IMR-90 (cell line): ENCODE measurements at regions of chr12 and their contacts with region 1.

Region 1: DNA sequence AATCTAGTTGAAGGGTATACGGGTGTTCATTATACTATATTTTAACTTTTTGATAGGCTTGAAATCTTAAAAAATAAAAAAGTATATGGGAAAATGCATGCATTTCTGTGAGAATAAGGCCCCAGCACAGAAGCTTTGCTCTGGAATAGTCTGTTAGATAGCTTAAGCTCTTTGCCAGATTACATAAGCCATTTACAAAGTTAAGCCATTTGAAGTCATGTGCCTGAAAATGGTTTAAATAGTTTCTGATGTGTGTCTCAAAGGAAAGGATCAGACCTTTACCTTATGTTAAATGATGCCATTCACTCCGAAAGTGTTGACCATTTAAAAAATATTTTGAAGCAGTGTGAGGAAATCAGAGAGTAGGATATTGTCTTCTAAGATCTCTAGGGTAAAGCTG is 51.3 kb downstream of the WASHC4 start:
- DNase-seq: no peak
- ATAC-seq: no peak
- H3K4me3 ChIP-seq: no peak overlapping the region
- H3K27ac ChIP-seq: no peak overlapping the region
- H3K4me1 ChIP-seq: no peaks in the 10 kb centered on the region
- H3K27me3 ChIP-seq: no peaks in the 10 kb centered on the region
- CTCF ChIP-seq: no peak
- POLR2A ChIP-seq: no peak
- RAD21 ChIP-seq: no peak

Region 2: GRCh38 chr12:105142259-105142658 is 16.6 kb before region 1 on chr12:
- CTCF ChIA-PET with region 1: interaction called, 3 read pairs
- POLR2A ChIA-PET with region 1: no interaction called
- dilution Hi-C with region 1: no loop called
- in situ Hi-C with region 1: no loop called
- intact Hi-C with region 1: loop called (anchors 2 kb)
- DNase-seq: no peak
- ATAC-seq: no peak
- H3K4me3 ChIP-seq: no peak overlapping the region
- H3K27ac ChIP-seq: no peak overlapping the region
- H3K4me1 ChIP-seq: peaks cover under 1% of the 10 kb centered on the region
- H3K27me3 ChIP-seq: no peaks in the 10 kb centered on the region
- CTCF ChIP-seq: no peak
- POLR2A ChIP-seq: no peak
- RAD21 ChIP-seq: no peak

Region 3: GRCh38 chr12:105171691-105172436 is 13.0 kb after region 1 on chr12:
- CTCF ChIA-PET with region 1: no interaction called
- POLR2A ChIA-PET with region 1: no interaction called
- dilution Hi-C with region 1: no loop called
- in situ Hi-C with region 1: no loop called
- intact Hi-C with region 1: no loop called
- DNase-seq: no peak
- ATAC-seq: no peak
- H3K4me3 ChIP-seq: no peak overlapping the region
- H3K27ac ChIP-seq: no peak overlapping the region
- H3K4me1 ChIP-seq: no peaks in the 10 kb centered on the region; the same call in 1 of the 2 replicates
- H3K27me3 ChIP-seq: no peaks in the 10 kb centered on the region
- CTCF ChIP-seq: no peak
- POLR2A ChIP-seq: no peak
- RAD21 ChIP-seq: no peak

Region 4: DNA sequence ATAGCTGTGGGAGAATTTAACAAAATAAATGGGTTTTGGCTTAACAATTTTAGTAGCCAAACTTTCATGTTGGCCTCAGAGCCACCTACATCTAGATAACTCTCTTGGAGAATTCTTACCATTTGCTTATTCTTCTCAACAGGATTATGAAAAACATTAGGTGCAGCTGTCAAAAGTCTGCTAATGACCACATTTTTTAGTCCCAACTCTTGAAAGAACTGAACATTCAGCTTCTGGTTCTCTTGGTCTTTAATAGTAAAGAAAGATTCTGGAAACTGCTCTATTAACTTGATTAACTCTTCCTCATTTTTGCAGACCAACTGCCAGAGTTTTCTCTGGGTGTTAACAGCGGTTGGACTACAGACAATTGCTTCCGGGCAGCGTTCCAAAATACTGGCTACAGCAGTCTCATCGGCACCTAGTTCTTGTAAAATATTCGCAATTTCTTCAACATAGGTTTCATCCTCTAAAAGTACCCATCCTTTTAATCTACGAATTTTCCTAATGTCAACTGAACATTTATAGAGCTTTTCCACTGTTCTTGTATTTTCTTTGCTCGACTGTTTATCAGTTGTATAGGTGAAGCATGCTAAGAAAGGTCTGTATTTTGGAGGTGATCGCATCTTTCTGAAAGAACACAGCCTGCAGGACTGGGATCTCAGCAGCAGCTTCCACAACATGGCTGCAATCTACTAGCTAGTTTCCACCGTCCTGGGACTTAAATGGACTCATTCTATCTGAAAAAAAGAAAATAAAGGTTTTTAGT is 1819.3 kb after region 1 on chr12:
- CTCF ChIA-PET with region 1: no interaction called
- POLR2A ChIA-PET with region 1: no interaction called
- dilution Hi-C with region 1: no loop called
- in situ Hi-C with region 1: no loop called
- intact Hi-C with region 1: no loop called
- DNase-seq: no peak
- ATAC-seq: no peak
- H3K4me3 ChIP-seq: no peak overlapping the region
- H3K27ac ChIP-seq: no peak overlapping the region
- H3K4me1 ChIP-seq: peaks cover 4% of the 10 kb centered on the region
- H3K27me3 ChIP-seq: no peaks in the 10 kb centered on the region
- CTCF ChIP-seq: no peak
- POLR2A ChIP-seq: no peak
- RAD21 ChIP-seq: no peak